Vagina (tissue), 2 donors: ENCODE measurements at regions of chr9 and their contacts with region 1.

Region 1: DNA sequence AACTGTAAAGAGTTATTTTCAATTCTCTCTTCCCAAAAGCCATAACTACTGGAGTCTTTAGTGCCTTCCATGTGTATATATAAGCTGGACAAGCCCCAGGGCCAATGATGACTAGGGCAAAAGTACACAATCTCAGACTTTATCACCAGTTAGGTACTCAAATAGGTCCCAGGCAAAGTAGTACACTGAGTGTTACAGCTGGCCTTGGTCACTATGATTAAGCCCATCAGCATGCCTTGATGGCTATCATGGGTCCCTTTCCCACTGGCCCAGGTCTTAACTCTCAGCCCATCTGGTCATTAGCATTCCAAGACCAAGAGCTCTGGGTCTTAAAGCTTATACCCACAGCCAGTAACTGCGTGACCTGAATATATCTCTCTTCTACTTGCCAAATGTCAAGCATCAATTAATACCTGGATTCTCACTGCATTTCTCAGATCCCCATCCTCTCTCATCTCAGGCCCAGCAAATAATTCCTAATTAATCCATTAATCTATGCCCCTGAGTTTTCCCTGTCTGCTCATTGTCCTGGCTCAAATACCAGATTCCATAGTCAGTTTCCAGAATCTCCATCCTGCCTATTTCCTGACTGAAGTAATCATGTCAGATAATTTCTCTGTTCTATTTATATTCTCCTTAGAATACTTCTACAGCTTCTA is 62.3 kb downstream of the NR6A1 start:
- DNase-seq: no peak
- H3K4me3 ChIP-seq: no peak overlapping the region
- H3K27ac ChIP-seq: no peak overlapping the region
- H3K4me1 ChIP-seq: no peaks in the 10 kb centered on the region
- H3K27me3 ChIP-seq: no peaks in the 10 kb centered on the region
- CTCF ChIP-seq: no peak
- POLR2A ChIP-seq: no peak

Region 2: DNA sequence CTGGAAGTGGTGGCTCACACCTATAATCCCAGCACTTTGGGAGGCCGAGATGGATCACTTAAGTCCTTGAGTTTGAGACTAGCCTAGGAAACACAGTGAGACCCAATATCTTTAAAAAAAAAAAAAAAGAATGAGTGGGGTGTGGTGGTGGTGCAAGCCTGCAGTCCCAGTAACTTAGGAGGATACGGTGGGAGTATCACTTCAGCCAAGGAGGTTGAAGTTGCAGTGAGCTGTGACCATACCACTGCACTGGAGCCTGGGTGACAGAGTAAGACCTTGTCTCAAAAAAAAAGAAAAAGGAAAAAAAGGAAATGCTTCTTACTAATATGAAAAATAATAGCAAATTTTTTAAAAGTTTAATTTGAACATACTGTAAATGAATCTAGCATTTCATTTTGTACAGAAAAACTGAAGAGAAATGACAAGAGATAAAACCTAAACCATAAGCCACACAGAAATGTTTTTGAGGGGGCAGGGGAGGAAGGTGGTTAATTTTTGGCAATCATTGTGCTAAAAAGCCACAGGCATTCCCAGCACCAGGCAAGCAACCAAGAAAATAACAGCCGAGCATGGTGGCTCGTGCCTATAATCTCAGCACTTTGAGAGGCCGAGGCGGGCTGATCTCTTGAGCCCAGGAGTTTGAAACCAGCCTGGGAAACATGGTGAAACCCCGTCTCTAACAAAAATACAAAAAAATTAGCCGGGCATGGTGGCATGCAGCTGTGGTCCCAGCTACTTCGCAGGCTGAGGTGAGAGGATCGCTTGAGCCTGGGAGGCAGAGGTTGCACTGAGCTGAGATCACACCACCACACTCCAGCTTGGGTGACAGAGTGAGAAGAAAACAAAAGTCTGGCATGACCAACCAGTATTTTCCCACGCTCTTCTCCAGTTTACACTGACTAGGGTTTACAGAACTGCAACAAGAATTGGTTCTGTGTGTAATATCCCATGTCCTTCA is 87.1 kb before region 1 on chr9:
- intact Hi-C with region 1: loop called (anchors 2 kb)
- DNase-seq: no peak
- H3K4me3 ChIP-seq: no peak overlapping the region
- H3K27ac ChIP-seq: no peak overlapping the region
- H3K4me1 ChIP-seq: no peaks in the 10 kb centered on the region
- H3K27me3 ChIP-seq: no peaks in the 10 kb centered on the region
- CTCF ChIP-seq: no peak
- POLR2A ChIP-seq: no peak